Activated CD4-positive, alpha-beta memory T cell treated with anti-CD3 and anti-CD28 coated beads for 36 hours (primary cell): ENCODE measurements at regions of chr7 and their contacts with region 1.

Region 1: DNA sequence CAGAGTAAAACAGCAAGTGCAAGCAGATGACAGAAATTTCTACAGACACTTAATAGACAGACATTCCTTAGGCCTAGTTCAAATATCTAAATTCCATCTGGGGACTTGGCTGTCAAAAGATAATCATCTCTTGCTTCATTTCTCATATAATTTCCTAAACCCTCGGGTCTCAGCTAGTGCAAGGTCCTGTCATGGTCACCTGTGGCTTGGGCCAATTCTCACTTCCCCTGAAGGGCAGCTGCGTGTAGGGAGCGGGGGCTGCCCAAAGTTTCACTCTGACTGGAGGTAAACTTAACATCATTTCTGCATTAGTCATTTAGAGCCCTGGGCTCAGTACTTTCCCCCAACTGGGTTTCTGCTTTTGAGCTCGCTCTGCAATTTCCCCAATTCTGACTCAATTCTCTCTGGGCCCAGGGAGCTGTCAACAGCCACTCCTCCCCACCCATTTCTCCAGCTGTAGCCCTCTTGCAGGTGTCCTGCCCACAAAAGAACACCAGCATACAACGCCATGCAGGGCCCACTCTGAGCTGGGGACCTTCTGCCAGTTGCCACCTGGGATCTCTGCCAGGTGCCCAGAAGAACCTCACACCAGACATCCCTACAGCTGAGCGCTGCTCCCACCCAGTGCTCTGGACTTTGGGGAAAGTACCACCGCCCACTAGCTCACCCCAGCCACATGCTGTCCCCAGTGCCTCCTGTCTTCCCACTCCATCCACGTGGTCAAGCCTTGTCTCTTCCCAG is 38.0 kb downstream of the VOPP1 start:
- DNase-seq: peak; percentile 90
- H3K4me3 Mint-ChIP-seq: peak overlapping the region; percentile 66
- H3K27ac Mint-ChIP-seq: peak overlapping the region; percentile 97
- H3K4me1 Mint-ChIP-seq: peaks cover 97% of the 10 kb centered on the region
- H3K27me3 Mint-ChIP-seq: no peaks in the 10 kb centered on the region

Region 2: GRCh38 chr7:53789741-53790140 is 1744.6 kb before region 1 on chr7:
- CTCF ChIA-PET with region 1: no interaction called
- POLR2A ChIA-PET with region 1: no interaction called
- intact Hi-C with region 1: no loop called
- DNase-seq: no peak
- H3K4me3 Mint-ChIP-seq: no peak overlapping the region
- H3K27ac Mint-ChIP-seq: no peak overlapping the region
- H3K4me1 Mint-ChIP-seq: no peaks in the 10 kb centered on the region
- H3K27me3 Mint-ChIP-seq: no peaks in the 10 kb centered on the region

Region 3: GRCh38 chr7:54995631-54996340 is 538.6 kb before region 1 on chr7:
- CTCF ChIA-PET with region 1: no interaction called
- POLR2A ChIA-PET with region 1: no interaction called
- intact Hi-C with region 1: loop called (anchors 10 kb)
- DNase-seq: peak; percentile 50
- H3K4me3 Mint-ChIP-seq: no peak overlapping the region
- H3K27ac Mint-ChIP-seq: peak overlapping the region; percentile 65
- H3K4me1 Mint-ChIP-seq: peaks cover 29% of the 10 kb centered on the region
- H3K27me3 Mint-ChIP-seq: peaks cover 7% of the 10 kb centered on the region

Region 4: DNA sequence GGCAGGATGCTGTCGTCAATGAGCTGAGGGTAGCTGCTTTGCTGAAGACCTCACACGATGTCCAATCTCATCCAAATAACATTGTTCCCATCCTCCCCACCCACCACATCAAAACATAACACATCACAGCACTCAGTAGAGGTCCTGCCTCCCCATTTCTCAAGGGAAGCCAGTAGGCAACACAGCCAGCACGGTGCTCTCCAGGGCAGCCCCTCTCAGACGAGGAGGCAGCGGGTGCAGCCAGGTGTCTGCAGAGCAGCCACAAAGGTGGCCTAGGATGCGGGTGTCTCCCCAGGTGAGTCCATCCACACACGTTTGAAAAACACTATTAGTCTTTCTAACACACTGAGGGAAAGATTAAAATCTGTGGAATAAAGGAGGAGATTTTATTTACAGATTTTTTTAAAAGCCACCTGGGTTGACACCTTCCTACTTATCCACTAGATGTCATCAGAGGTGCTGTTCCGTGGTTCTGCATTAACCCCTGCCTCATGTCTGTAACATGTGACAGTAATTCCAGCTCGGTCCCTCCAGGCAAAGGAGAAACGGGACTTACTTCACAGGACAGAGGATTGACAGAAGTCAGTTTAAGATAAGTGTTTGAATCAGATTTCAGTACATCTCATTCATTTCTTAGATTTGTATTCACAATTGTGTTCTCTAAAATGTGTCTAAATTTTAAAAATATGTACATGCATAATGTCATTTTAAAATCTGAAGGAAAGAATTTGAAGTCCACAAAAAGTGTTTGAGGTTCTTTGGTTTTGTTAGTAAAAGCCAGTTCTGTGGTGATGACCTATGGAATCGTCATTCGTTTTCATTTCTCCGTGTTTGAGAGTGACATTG is 101.2 kb before region 1 on chr7:
- CTCF ChIA-PET with region 1: interaction called, 6 read pairs
- POLR2A ChIA-PET with region 1: no interaction called
- intact Hi-C with region 1: loop called (anchors 2 kb)
- DNase-seq: peak; percentile 32
- H3K4me3 Mint-ChIP-seq: no peak overlapping the region
- H3K27ac Mint-ChIP-seq: no peak overlapping the region
- H3K4me1 Mint-ChIP-seq: peaks cover 28% of the 10 kb centered on the region
- H3K27me3 Mint-ChIP-seq: no peaks in the 10 kb centered on the region

Region 5: GRCh38 chr7:55477781-55478374 is 56.5 kb before region 1 on chr7:
- CTCF ChIA-PET with region 1: no interaction called
- POLR2A ChIA-PET with region 1: no interaction called
- intact Hi-C with region 1: no loop called
- DNase-seq: peak; percentile 6
- H3K4me3 Mint-ChIP-seq: no peak overlapping the region
- H3K27ac Mint-ChIP-seq: no peak overlapping the region
- H3K4me1 Mint-ChIP-seq: peaks cover 84% of the 10 kb centered on the region
- H3K27me3 Mint-ChIP-seq: no peaks in the 10 kb centered on the region

Region 6: DNA sequence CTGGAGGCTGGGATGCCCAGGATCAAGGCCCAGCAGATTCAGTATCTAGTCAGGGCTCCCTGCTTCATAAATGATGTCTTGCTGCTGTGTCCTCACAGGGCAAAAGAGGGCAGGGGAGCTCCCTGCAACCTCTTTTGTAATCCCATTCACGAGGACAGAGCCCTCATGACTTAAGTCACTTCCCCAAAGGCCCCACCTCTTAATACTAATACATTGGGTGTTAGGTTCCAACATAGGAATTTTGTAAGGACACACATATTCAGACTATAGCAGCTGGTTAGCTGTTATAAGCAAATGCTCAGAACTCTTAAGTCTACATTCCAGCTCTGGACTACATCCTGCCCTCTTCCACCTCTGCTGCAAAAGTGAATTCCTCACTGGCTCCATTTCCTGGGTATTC is 25.0 kb before region 1 on chr7:
- CTCF ChIA-PET with region 1: interaction called, 16 read pairs
- POLR2A ChIA-PET with region 1: interaction called, 39 read pairs
- intact Hi-C with region 1: loop called (anchors 1 kb)
- DNase-seq: no peak
- H3K4me3 Mint-ChIP-seq: no peak overlapping the region
- H3K27ac Mint-ChIP-seq: peak overlapping the region; percentile 45
- H3K4me1 Mint-ChIP-seq: peaks cover 79% of the 10 kb centered on the region
- H3K27me3 Mint-ChIP-seq: no peaks in the 10 kb centered on the region

Region 7: GRCh38 chr7:55521917-55522902 is 12.1 kb before region 1 on chr7:
- CTCF ChIA-PET with region 1: interaction called, 12 read pairs
- POLR2A ChIA-PET with region 1: interaction called, 65 read pairs
- intact Hi-C with region 1: loop called (anchors 1 kb)
- DNase-seq: no peak
- H3K4me3 Mint-ChIP-seq: no peak overlapping the region
- H3K27ac Mint-ChIP-seq: no peak overlapping the region
- H3K4me1 Mint-ChIP-seq: peaks cover 84% of the 10 kb centered on the region
- H3K27me3 Mint-ChIP-seq: no peaks in the 10 kb centered on the region

Region 8: GRCh38 chr7:55557666-55558188 is 23.4 kb after region 1 on chr7:
- CTCF ChIA-PET with region 1: interaction called, 7 read pairs
- POLR2A ChIA-PET with region 1: interaction called, 19 read pairs
- intact Hi-C with region 1: loop called (anchors 1 kb)
- DNase-seq: peak; percentile 62
- H3K4me3 Mint-ChIP-seq: peak overlapping the region; percentile 13
- H3K27ac Mint-ChIP-seq: peak overlapping the region; percentile 74
- H3K4me1 Mint-ChIP-seq: peaks cover 93% of the 10 kb centered on the region
- H3K27me3 Mint-ChIP-seq: no peaks in the 10 kb centered on the region

Region 9: GRCh38 chr7:56051339-56052191 is 517.2 kb after region 1 on chr7 and contains the starts of genes CCT6A and PSPH:
- CTCF ChIA-PET with region 1: no interaction called
- POLR2A ChIA-PET with region 1: no interaction called
- intact Hi-C with region 1: loop called (anchors 5 kb)
- DNase-seq: peak; percentile 94
- H3K4me3 Mint-ChIP-seq: peak within 1 kb of the TSS; percentile 95
- H3K27ac Mint-ChIP-seq: peak within 1 kb of the TSS; percentile 94
- H3K4me1 Mint-ChIP-seq: peaks cover 36% of the 10 kb centered on the region
- H3K27me3 Mint-ChIP-seq: no peaks in the 10 kb centered on the region
- total RNA-seq, gene CCT6A: 222 to 230 TPM
- total RNA-seq, gene PSPH: 16.3 to 20.9 TPM